Right lobe of liver (tissue), 6 donors: ENCODE measurements at regions of chr4 and their contacts with region 1.

Region 1: GRCh38 chr4:165464813-165465381 is 86.1 kb downstream of the CPE start:
- DNase-seq: no peak
- ATAC-seq: peak; percentile 80 to 91 (median 86)
- H3K4me3 ChIP-seq: no peak overlapping the region
- H3K27ac ChIP-seq: no peak overlapping the region
- H3K4me1 ChIP-seq: peaks cover 0 to 7% (median 3%) of the 10 kb centered on the region in 4 donors
- H3K27me3 ChIP-seq: no peaks in the 10 kb centered on the region
- CTCF ChIP-seq: peak; percentile 83 to 85 (median 84)
- POLR2A ChIP-seq: no peak

Region 2: GRCh38 chr4:165131247-165131832 is 333.6 kb before region 1 on chr4:
- intact Hi-C with region 1: loop called in 1 of 2 experiments (anchors 5 kb)
- DNase-seq: peak in 2 of 3 donors; percentile 38 to 67
- ATAC-seq: peak; percentile 91 to 95 (median 93)
- H3K4me3 ChIP-seq: peak overlapping the region in 1 of 3 donors; percentile 17
- H3K27ac ChIP-seq: no peak overlapping the region
- H3K4me1 ChIP-seq: peaks cover 0 to 14% (median 0%) of the 10 kb centered on the region in 4 donors
- H3K27me3 ChIP-seq: no peaks in the 10 kb centered on the region
- CTCF ChIP-seq: peak; percentile 82 to 97 (median 86)
- POLR2A ChIP-seq: no peak

Region 3: DNA sequence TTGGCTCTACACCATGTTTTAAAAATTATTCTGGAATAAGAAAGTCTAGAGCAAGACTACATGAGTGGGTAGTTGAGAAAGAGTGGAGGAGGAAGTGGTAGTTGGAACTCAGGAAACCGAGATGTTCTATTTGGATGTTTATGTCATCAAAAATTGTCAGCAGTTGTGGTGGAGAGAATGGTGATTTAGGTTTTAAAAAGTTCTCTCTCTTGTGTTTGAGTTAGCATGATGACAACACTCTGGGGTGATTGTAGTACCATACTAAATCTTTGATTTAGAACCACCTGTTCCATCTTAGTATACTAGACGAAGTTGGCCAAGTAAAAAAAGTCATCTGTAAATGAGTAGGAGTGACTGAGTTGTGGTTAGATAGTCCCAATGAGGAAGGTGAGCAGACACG is 216.8 kb before region 1 on chr4:
- intact Hi-C with region 1: no loop called
- DNase-seq: no peak
- ATAC-seq: peak in 2 of 4 donors; percentile 8 to 12
- H3K4me3 ChIP-seq: no peak overlapping the region
- H3K27ac ChIP-seq: no peak overlapping the region
- H3K4me1 ChIP-seq: peaks cover 0 to 12% (median 0%) of the 10 kb centered on the region in 4 donors
- H3K27me3 ChIP-seq: no peaks in the 10 kb centered on the region
- CTCF ChIP-seq: no peak
- POLR2A ChIP-seq: no peak

Region 4: GRCh38 chr4:165355900-165356300 is 109.0 kb before region 1 on chr4:
- intact Hi-C with region 1: loop called (anchors 10 kb)
- DNase-seq: peak in 1 of 3 donors; percentile 23
- ATAC-seq: peak in 3 of 4 donors; percentile 56 to 89 (median 83)
- H3K4me3 ChIP-seq: no peak overlapping the region
- H3K27ac ChIP-seq: no peak overlapping the region
- H3K4me1 ChIP-seq: no peaks in the 10 kb centered on the region
- H3K27me3 ChIP-seq: no peaks in the 10 kb centered on the region
- CTCF ChIP-seq: peak; percentile 30 to 59 (median 44)
- POLR2A ChIP-seq: no peak